ENCODE measurements at regions of chr5 and their contacts with region 1.

Region 1: GRCh38 chr5:127564002-127564769 is 46.7 kb downstream of the PRRC1 start:
- DNase-seq: peak; percentile 18
- H3K4me3 ChIP-seq: no peak overlapping the region
- H3K27ac ChIP-seq: no peak overlapping the region
- H3K27me3 ChIP-seq: peaks cover 9% of the 10 kb centered on the region
- CTCF ChIP-seq: peak; percentile 59

Region 2: GRCh38 chr5:127486471-127486870 is 77.7 kb before region 1 on chr5:
- CTCF ChIA-PET with region 1: no interaction called
- POLR2A ChIA-PET with region 1: no interaction called
- DNase-seq: no peak
- H3K4me3 ChIP-seq: no peak overlapping the region
- H3K27ac ChIP-seq: no peak overlapping the region
- H3K27me3 ChIP-seq: peaks cover 7% of the 10 kb centered on the region
- CTCF ChIP-seq: no peak

Region 3: GRCh38 chr5:127577458-127577857 is 13.3 kb after region 1 on chr5:
- CTCF ChIA-PET with region 1: no interaction called
- POLR2A ChIA-PET with region 1: no interaction called
- DNase-seq: no peak
- H3K4me3 ChIP-seq: no peak overlapping the region
- H3K27ac ChIP-seq: no peak overlapping the region
- H3K27me3 ChIP-seq: no peaks in the 10 kb centered on the region
- CTCF ChIP-seq: no peak

Region 4: GRCh38 chr5:128201065-128201926 is 637.1 kb after region 1 on chr5:
- CTCF ChIA-PET with region 1: interaction called, 14 read pairs
- POLR2A ChIA-PET with region 1: no interaction called
- DNase-seq: no peak
- H3K4me3 ChIP-seq: peak overlapping the region; percentile 33
- H3K27ac ChIP-seq: no peak overlapping the region
- H3K27me3 ChIP-seq: no peaks in the 10 kb centered on the region
- CTCF ChIP-seq: peak; percentile 85